Common myeloid progenitor, CD34-positive (primary cell): ENCODE measurements at regions of chr6 and their contacts with region 1.

Region 1: DNA sequence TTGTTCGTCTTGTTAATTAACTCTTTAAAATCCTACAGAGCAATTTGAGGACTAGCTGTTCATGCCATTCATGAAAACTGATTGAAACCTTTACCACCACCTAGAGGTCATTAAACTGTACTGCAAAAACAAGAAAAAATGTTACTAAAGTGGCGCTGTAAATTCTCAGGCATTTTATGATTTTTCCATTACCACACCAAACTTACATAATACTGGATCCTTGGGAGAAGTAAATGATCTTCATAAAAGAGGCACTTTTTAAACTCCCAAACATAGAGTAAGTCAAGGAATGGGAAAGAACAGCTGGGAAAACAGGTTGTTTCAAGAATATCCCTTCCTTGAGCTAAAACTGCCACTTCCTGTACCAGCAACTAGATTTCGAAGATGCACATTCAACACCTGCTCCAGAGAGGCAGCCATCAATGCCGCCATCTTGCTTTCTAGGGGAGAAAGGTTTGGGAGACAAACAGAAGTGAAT is 54.3 kb downstream of the MYLIP start:
- DNase-seq: peak; percentile 42 to 65 (median 65)
- H3K4me3 ChIP-seq: no peak overlapping the region
- H3K27ac ChIP-seq: no peak overlapping the region
- H3K4me1 ChIP-seq: peaks cover 0 to 17% (median 7%) of the 10 kb centered on the region in 4 experiments
- H3K27me3 ChIP-seq: no peaks in the 10 kb centered on the region

Region 2: GRCh38 chr6:15691250-15691869 is 491.9 kb before region 1 on chr6:
- CTCF ChIA-PET with region 1: interaction called, 20 read pairs
- POLR2A ChIA-PET with region 1: no interaction called
- DNase-seq: peak; percentile 89 to 94 (median 91)
- H3K4me3 ChIP-seq: peak overlapping the region in 2 of 7 experiments; percentile 24 to 54
- H3K27ac ChIP-seq: no peak overlapping the region
- H3K4me1 ChIP-seq: peaks cover 0 to 6% (median 3%) of the 10 kb centered on the region in 4 experiments
- H3K27me3 ChIP-seq: no peaks in the 10 kb centered on the region

Region 3: GRCh38 chr6:16128759-16129622 is 54.2 kb before region 1 on chr6 and contains the start of gene MYLIP:
- CTCF ChIA-PET with region 1: interaction called, 7 read pairs
- POLR2A ChIA-PET with region 1: interaction called, 10 read pairs
- DNase-seq: peak; percentile 96 to 98 (median 97)
- H3K4me3 ChIP-seq: peak within 1 kb of the TSS; percentile 73 to 97 (median 88)
- H3K27ac ChIP-seq: peak within 1 kb of the TSS; percentile 65 to 83
- H3K4me1 ChIP-seq: peaks cover 21 to 38% (median 34%) of the 10 kb centered on the region in 4 experiments
- H3K27me3 ChIP-seq: no peaks in the 10 kb centered on the region

Region 4: DNA sequence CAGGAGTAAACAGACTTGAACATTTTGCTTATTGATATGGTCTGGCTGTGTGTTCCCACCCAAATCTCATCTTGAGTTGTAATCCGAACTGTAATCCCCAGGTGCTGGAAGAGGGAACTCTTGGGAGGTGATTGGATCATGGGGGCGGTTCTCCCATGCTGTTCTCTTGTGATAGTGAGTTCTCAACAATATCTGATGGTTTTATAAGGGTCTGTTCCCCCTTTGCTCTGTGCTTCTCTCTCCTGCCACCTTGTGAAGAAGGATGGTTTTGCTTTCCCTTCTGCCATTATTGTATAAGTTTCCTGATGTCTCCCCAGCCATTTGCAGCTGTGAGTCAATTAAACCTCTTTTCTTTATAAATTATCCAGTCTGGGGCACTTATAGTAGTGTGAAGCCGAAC is 14.4 kb before region 1 on chr6:
- CTCF ChIA-PET with region 1: interaction called, 10 read pairs
- POLR2A ChIA-PET with region 1: no interaction called
- DNase-seq: peak; percentile 60 to 77 (median 74)
- H3K4me3 ChIP-seq: no peak overlapping the region
- H3K27ac ChIP-seq: no peak overlapping the region
- H3K4me1 ChIP-seq: peaks cover 0 to 10% (median 8%) of the 10 kb centered on the region in 4 experiments
- H3K27me3 ChIP-seq: no peaks in the 10 kb centered on the region

Region 5: GRCh38 chr6:16200321-16200883 is 17.2 kb after region 1 on chr6:
- CTCF ChIA-PET with region 1: interaction called, 16 read pairs
- POLR2A ChIA-PET with region 1: no interaction called
- DNase-seq: no peak
- H3K4me3 ChIP-seq: no peak overlapping the region
- H3K27ac ChIP-seq: no peak overlapping the region
- H3K4me1 ChIP-seq: no peaks in the 10 kb centered on the region
- H3K27me3 ChIP-seq: no peaks in the 10 kb centered on the region

Region 6: GRCh38 chr6:16206595-16207037 is 23.4 kb after region 1 on chr6:
- CTCF ChIA-PET with region 1: interaction called, 16 read pairs
- POLR2A ChIA-PET with region 1: no interaction called
- DNase-seq: peak; percentile 54 to 73 (median 68)
- H3K4me3 ChIP-seq: no peak overlapping the region
- H3K27ac ChIP-seq: no peak overlapping the region
- H3K4me1 ChIP-seq: peaks cover 0 to 2% (median 0%) of the 10 kb centered on the region in 4 experiments
- H3K27me3 ChIP-seq: no peaks in the 10 kb centered on the region